ENCODE measurements at regions of chr5 and their contacts with region 1.

Region 1: GRCh38 chr5:122076664-122077365 is 1.2 kb downstream of the LOX start:
- DNase-seq: no peak
- H3K4me3 ChIP-seq: peak overlapping the region; percentile 90
- CTCF ChIP-seq: peak; percentile 96

Region 2: DNA sequence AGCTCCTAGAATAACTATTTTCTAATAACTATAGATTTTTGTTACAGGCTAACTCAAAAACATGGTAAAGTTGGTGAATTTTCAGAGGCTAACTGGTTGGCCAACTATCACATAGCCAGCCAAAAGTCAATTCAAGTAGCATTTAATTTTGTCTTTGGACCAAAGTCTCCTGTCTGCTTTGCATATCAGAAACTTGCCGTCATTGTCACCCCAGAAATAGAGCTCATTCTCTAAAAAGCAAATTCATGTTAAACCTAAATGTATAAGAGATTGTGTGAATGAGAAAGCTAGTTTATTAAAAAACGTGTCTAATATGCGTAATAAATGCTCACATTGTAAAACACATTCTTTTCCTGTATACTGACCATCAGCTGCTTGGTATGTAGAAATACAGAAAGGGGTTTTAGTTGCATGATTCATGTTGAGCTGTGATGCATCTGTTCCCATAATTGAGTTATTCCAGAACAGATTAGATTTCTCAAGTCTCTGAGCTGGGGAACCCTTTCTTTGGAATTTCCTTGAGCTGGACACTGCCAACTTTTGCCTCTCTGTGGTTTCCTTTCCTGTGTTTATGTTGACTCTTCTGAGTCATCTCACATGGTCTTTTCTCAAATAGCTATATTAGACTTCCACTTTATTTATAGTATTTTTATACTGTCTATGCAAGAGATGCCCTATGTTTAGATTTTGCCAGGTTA is 107.8 kb before region 1 on chr5:
- CTCF ChIA-PET with region 1: interaction called, 12 read pairs
- POLR2A ChIA-PET with region 1: interaction called, 16 read pairs
- DNase-seq: peak; percentile 97
- H3K4me3 ChIP-seq: no peak overlapping the region
- CTCF ChIP-seq: no peak

Region 3: GRCh38 chr5:122063836-122064235 is 13.0 kb before region 1 on chr5:
- CTCF ChIA-PET with region 1: interaction called, 36 read pairs
- POLR2A ChIA-PET with region 1: interaction called, 14 read pairs
- DNase-seq: no peak
- H3K4me3 ChIP-seq: no peak overlapping the region
- CTCF ChIP-seq: no peak

Region 4: GRCh38 chr5:122101636-122102285 is 24.9 kb after region 1 on chr5:
- CTCF ChIA-PET with region 1: interaction called, 36 read pairs
- POLR2A ChIA-PET with region 1: interaction called, 8 read pairs
- DNase-seq: no peak
- H3K4me3 ChIP-seq: no peak overlapping the region
- CTCF ChIP-seq: peak; percentile 46

Region 5: GRCh38 chr5:122182491-122182921 is 105.7 kb after region 1 on chr5:
- CTCF ChIA-PET with region 1: interaction called, 12 read pairs
- POLR2A ChIA-PET with region 1: interaction called, 4 read pairs
- DNase-seq: no peak
- H3K4me3 ChIP-seq: peak overlapping the region; percentile 18; the same call in 1 of the 2 replicates
- CTCF ChIP-seq: no peak

Measured in AG04449 (cell line).